Posterior cingulate gyrus (tissue), 11 donors: ENCODE measurements at regions of chr1 and their contacts with region 1.

Region 1: GRCh38 chr1:52056163-52056936 is at the start of gene BTF3L4:
- DNase-seq: peak; percentile 94 to 100 (median 98)

Region 2: DNA sequence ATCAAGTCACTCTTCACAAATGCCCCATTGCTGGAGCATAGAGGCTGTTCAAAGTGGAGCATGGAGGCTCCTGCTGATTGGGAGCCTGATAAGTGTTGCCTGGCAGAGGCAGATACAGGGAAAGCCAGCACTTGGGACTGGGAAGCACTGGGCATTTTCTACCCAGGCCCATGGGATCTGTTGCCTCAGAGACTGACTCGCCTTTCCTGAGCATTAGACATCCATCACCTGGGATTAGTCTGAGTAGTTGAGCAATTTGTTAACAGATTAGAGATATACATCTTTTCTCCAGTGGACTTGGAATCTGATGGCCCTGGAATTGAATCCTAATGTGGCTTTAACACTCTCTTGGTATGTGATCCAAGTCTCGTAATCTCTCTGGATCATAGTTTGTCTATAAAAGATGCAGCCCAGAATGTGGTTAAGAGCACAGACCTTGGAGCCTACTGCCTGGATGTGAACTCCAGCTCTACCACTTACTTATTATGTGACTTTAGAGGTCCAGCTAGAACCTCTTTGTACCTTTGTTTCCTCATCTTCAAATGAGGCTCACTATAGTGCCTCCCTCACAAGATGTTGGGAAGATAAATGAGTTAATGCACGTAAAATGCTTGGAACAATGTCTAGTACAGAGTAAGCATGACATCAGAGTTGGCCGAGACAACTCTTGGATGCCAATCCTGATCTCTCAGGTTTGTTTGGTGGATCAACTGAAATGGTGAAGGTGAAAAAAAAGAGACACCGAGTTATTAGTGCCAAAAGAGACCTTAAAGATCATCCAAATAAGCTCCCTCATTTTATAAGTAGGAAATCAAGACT is 139.6 kb before region 1 on chr1:
- intact Hi-C with region 1: no loop called
- DNase-seq: no peak

Region 3: GRCh38 chr1:51936531-51936930 is 119.8 kb before region 1 on chr1:
- intact Hi-C with region 1: no loop called
- DNase-seq: no peak

Region 4: DNA sequence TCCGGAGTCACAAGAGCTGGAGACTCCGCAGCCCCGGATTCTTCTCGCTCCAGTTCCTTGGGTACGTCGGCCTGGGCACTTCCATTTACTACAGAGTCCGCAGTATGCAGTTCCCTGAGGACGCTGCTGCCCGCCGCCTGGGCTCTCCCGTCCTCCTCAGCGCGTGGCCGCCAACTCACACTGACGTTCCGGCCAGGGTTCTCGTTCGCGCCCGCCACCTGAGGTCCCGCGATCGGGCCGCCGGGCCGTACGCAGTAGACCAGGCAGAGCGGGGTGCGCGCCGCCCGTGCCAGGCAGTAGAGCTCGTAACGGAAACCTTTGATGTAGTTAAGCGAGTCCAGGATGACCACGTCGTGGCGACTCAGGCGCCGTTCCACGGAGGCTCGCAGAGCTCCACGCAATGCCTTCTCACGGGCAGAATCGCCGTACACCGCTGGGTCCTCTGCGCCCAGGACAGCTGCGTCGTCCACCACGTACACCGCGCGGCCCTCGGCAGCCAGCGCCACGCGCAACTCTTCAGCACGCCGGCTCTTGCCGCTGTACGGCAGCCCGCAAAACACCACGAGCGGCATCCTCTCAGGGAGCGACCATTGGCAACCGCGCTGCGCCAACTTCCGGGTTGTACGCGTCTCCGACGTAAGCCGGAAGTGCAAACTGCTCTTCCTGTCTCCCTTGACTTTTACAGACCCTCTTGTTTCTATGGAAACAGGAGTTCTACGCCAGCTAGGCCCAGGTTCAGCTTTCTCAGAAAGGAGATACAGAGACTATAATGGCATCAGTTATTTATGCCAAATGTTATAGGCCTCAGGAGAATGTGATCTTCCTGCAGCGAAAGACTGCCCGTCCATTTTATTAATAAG is 22.9 kb before region 1 on chr1 and contains the start of gene KTI12:
- intact Hi-C with region 1: loop called (anchors 1 kb)
- DNase-seq: peak; percentile 79 to 98 (median 90)

Region 5: GRCh38 chr1:52102336-52103013 is 46.1 kb after region 1 on chr1:
- intact Hi-C with region 1: no loop called
- DNase-seq: no peak

Region 6: DNA sequence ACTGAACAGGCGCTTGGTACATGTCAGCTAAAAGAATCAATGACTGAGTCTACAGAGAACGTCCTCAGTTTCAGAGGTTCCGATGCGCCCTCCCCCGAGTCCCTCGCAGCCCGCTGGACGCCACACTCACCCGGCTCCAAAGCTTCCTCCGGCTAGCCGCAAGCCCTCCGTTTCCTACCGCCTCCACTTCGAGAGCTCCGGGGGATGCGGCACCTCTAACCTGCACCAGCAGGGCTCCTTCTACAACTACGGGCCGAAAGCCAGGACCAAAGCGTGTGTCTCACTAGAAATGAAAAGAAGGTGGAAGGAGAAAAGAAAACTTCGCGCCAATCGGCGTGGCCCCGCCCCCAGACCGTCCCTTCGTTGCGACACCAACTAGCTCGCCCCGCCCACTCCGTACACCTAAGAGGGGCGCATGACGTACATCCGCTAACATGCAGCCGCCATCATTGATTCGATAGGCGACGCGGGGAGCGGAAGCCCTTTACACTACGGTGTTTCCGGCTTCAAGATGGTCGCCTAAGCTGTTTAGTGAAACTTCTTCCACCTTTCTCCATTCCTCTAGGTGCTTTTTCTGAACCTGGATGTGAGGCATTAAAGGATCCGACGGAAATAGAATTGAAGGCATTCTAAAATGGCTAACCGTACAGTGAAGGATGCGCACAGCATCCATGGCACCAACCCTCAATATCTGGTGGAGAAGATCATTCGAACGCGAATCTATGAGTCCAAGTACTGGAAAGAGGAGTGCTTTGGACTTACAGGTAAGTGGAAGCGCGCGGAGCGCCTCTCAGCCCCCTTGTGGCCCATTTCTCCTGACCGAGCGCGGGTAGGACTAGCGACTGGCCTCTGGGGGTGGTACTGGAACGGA is 348.0 kb after region 1 on chr1 and contains the starts of genes ORC1 and PRPF38A:
- intact Hi-C with region 1: no loop called
- DNase-seq: peak; percentile 94 to 99 (median 98)

Region 7: GRCh38 chr1:52697795-52698674 is 641.7 kb after region 1 on chr1 and contains the start of gene COA7:
- intact Hi-C with region 1: loop called (anchors 10 kb)
- DNase-seq: peak; percentile 75 to 98 (median 84)